ENCODE measurements at regions of chr19 and their contacts with region 1.

Region 1: DNA sequence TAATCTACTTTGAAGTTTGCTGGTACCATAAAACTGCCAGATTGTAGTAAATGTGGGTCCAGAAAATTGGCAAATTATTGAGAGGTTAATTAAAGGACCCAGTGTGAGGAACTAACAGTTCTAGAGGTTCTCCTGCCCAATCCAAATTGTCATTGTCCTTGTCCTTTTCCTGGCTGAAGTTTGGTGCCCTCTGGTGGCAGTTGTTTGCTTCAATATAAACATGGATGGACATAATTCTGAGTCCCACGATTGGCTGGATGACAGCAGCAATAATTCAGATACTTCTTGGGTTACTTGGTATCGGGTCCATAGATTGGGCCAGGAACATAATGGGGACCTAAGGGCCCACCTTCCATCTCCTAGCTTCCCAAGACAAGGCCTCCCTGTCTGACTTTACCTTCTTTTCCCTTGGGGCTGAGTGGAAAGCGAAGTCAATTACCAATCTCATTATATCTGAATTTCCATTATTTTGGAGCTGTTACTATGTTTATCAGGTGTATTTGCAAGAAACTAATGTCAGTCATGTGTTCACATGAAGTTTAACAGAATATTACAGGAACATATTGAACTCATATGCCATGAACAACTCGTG is 33.8 kb upstream of the GARRE1 start:
- DNase-seq: peak in 1 of 2 donors; percentile 68
- ATAC-seq: peak in 5 of 8 donors; percentile 20 to 74 (median 42)
- H3K4me3 ChIP-seq: no peak overlapping the region
- H3K27ac ChIP-seq: no peak overlapping the region
- H3K4me1 ChIP-seq: peaks cover 0 to 25% (median 0%) of the 10 kb centered on the region in 9 donors
- H3K27me3 ChIP-seq: no peaks in the 10 kb centered on the region
- CTCF ChIP-seq: peak; percentile 29 to 81 (median 72)

Region 2: GRCh38 chr19:34184880-34185491 is 35.6 kb before region 1 on chr19:
- intact Hi-C with region 1: loop called in 1 of 10 experiments (anchors 5 kb)
- DNase-seq: no peak
- ATAC-seq: peak in 3 of 8 donors; percentile 19 to 29 (median 23)
- H3K4me3 ChIP-seq: peak overlapping the region in 1 of 10 donors; percentile 11
- H3K27ac ChIP-seq: peak overlapping the region in 3 of 10 donors; percentile 6 to 35 (median 33)
- H3K4me1 ChIP-seq: peaks cover 7 to 100% (median 89%) of the 10 kb centered on the region in 9 donors
- H3K27me3 ChIP-seq: no peaks in the 10 kb centered on the region
- CTCF ChIP-seq: no peak

Region 3: DNA sequence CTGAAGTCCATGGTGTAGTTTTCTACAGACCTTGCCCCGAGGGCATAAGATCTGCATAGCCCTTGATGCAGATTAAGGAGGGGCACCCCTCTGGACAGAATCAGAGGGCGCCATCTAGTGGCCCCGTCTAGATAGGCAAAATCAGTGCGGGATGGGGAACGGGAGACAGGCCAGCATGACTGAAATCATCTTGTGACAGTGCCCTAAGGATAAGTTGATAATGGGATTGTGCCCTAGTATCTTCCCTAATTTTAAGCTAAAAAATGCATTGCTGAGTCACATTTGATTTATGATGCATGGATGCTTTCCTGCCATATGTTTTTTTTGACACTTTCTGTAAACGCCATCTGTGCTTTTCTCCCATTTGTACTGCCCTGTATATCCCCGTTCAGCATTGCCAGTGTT is 125.4 kb after region 1 on chr19:
- intact Hi-C with region 1: loop called in 2 of 10 experiments (anchors 1 to 10 kb)
- DNase-seq: peak; percentile 49 to 54
- ATAC-seq: peak in 7 of 8 donors; percentile 50 to 84 (median 82)
- H3K4me3 ChIP-seq: no peak overlapping the region
- H3K27ac ChIP-seq: no peak overlapping the region
- H3K4me1 ChIP-seq: peaks cover 0 to 5% (median 0%) of the 10 kb centered on the region in 9 donors
- H3K27me3 ChIP-seq: no peaks in the 10 kb centered on the region
- CTCF ChIP-seq: peak; percentile 70 to 85 (median 82)